Naive thymus-derived CD4-positive, alpha-beta T cell (primary cell): ENCODE measurements at regions of chr1 and their contacts with region 1.

Region 1: DNA sequence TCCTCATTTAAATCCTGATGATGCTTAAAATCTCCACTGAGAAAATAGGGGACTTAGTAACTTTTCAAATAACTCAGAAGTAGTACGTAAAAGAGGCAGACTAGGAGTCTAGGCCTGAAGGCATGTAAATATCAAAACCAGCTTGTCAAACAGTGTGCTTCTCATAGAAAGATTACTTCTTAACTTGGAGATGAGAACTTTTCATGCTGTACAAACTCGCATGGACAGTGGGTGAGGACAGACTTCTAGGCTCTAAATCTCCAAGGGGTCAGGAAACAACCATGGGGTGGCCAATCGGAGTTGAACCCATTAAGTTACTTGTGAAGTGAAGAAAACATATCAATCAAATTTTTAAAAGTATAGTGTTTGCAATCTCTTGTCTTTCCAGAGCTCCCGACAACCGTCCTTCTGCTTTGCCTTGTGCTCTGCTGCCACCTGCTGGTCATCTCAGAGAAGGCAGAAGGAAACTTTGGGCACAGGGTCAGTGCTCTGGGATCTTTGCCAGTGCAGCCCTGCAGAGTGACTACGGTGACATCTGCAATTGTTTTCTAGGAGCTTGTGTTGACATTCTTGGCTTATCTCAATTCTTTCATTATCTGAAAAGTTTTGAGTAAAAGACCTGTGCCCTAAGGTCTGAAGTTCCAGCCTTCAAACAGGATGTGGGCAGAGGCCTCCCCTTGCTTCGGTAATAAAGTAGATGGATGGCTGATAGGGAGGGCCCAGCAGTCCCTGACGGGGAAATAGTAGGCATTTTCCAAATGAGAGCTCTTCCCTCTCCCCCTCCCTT is 105.1 kb upstream of the PDE4B start:
- DNase-seq: peak; percentile 47 to 81 (median 71)
- ATAC-seq: peak; percentile 92
- H3K4me3 ChIP-seq: no peak overlapping the region
- H3K4me3 Mint-ChIP-seq: peak overlapping the region in 1 of 10 donors; percentile 17
- H3K27ac ChIP-seq: no peak overlapping the region
- H3K27ac Mint-ChIP-seq: peak overlapping the region in 1 of 9 donors; percentile 51
- H3K4me1 ChIP-seq: peaks cover 0 to 5% of the 10 kb centered on the region in 2 donors
- H3K4me1 Mint-ChIP-seq: peaks cover 0 to 14% (median 0%) of the 10 kb centered on the region in 7 donors
- H3K27me3 ChIP-seq: no peaks in the 10 kb centered on the region
- H3K27me3 Mint-ChIP-seq: peaks cover 11 to 29% (median 16%) of the 10 kb centered on the region in 5 donors

Region 2: DNA sequence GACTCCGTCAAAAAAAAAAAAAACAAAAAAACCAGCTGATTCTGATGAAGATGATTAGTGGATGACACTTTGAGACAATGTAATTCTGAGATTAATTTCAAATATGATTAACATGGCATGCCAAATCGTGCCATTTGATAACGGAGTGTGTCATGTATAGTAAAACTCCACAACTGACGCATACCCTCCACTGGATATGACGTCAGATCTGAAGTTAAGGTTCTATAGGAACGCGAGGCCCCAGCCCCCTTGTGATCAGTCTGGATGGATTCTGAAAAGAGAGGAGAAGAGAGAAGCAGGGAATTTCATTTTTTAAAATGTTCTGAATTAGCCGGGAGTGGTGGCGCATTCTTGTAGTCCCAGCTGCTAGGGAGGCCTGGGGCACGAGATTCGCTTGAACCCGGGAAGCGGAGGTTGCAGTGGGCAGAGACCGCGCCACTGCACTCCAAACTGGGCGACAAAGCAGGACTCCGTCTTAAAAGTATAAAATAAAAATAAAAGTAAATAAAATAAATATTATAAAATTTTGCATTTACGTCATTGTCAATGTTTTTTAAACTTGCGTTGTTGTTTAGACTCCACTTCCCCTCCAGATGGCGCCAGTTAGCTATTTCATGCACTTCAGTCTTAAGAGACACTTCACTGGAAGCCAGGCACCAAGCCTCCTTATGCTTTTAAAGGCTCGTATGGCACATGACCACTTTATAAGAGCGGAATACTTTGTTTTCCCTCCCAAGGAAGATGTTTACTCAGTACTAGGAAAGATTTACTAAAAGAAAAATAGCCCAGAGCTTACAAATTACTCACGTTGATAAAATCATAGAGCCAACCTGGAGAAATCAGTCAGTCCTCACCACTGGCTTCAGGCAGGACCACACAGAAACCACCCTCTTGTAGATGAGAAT is 1418.7 kb before region 1 on chr1:
- CTCF ChIA-PET with region 1: interaction called, 3 read pairs
- POLR2A ChIA-PET with region 1: no interaction called
- intact Hi-C with region 1: loop called in 1 of 2 experiments (anchors 1 kb)
- DNase-seq: peak; percentile 30 to 74 (median 62)
- ATAC-seq: peak; percentile 75
- H3K4me3 ChIP-seq: no peak overlapping the region
- H3K4me3 Mint-ChIP-seq: no peak overlapping the region
- H3K27ac ChIP-seq: no peak overlapping the region
- H3K27ac Mint-ChIP-seq: no peak overlapping the region
- H3K4me1 ChIP-seq: no peaks in the 10 kb centered on the region
- H3K4me1 Mint-ChIP-seq: no peaks in the 10 kb centered on the region
- H3K27me3 ChIP-seq: no peaks in the 10 kb centered on the region
- H3K27me3 Mint-ChIP-seq: peaks cover 3 to 18% (median 10%) of the 10 kb centered on the region in 5 donors

Region 3: GRCh38 chr1:64823691-64824476 is 863.7 kb before region 1 on chr1:
- CTCF ChIA-PET with region 1: interaction called, 3 read pairs
- POLR2A ChIA-PET with region 1: no interaction called
- intact Hi-C with region 1: loop called in 1 of 2 experiments (anchors 1 kb)
- DNase-seq: peak in 8 of 9 donors; percentile 38 to 74 (median 64)
- ATAC-seq: peak; percentile 80
- H3K4me3 ChIP-seq: no peak overlapping the region
- H3K4me3 Mint-ChIP-seq: peak overlapping the region in 3 of 10 donors; percentile 30 to 44 (median 44)
- H3K27ac ChIP-seq: no peak overlapping the region
- H3K27ac Mint-ChIP-seq: peak overlapping the region in 7 of 9 donors; percentile 5 to 77 (median 39)
- H3K4me1 ChIP-seq: peaks cover 5 to 17% of the 10 kb centered on the region in 2 donors
- H3K4me1 Mint-ChIP-seq: peaks cover 13 to 31% (median 26%) of the 10 kb centered on the region in 7 donors
- H3K27me3 ChIP-seq: no peaks in the 10 kb centered on the region
- H3K27me3 Mint-ChIP-seq: peaks cover 0 to 2% (median 0%) of the 10 kb centered on the region in 5 donors

Region 4: GRCh38 chr1:65075123-65075976 is 612.3 kb before region 1 on chr1:
- CTCF ChIA-PET with region 1: interaction called, 8 read pairs
- POLR2A ChIA-PET with region 1: no interaction called
- intact Hi-C with region 1: loop called (anchors 1 to 5 kb)
- DNase-seq: peak in 8 of 9 donors; percentile 43 to 81 (median 72)
- ATAC-seq: peak; percentile 97
- H3K4me3 ChIP-seq: no peak overlapping the region
- H3K4me3 Mint-ChIP-seq: peak overlapping the region in 1 of 10 donors; percentile 22
- H3K27ac ChIP-seq: no peak overlapping the region
- H3K27ac Mint-ChIP-seq: peak overlapping the region in 3 of 9 donors; percentile 26 to 76 (median 43)
- H3K4me1 ChIP-seq: peaks cover under 1 to 4% of the 10 kb centered on the region in 2 donors
- H3K4me1 Mint-ChIP-seq: peaks cover 6 to 34% (median 28%) of the 10 kb centered on the region in 7 donors
- H3K27me3 ChIP-seq: no peaks in the 10 kb centered on the region
- H3K27me3 Mint-ChIP-seq: peaks cover 0 to 9% (median 4%) of the 10 kb centered on the region in 5 donors

Region 5: GRCh38 chr1:65235867-65236805 is 451.5 kb before region 1 on chr1:
- CTCF ChIA-PET with region 1: interaction called, 26 read pairs
- POLR2A ChIA-PET with region 1: no interaction called
- intact Hi-C with region 1: loop called in 1 of 2 experiments (anchors 1 kb)
- DNase-seq: peak in 4 of 9 donors; percentile 12 to 28 (median 22)
- ATAC-seq: peak; percentile 54
- H3K4me3 ChIP-seq: no peak overlapping the region
- H3K4me3 Mint-ChIP-seq: no peak overlapping the region
- H3K27ac ChIP-seq: no peak overlapping the region
- H3K27ac Mint-ChIP-seq: no peak overlapping the region
- H3K4me1 ChIP-seq: no peaks in the 10 kb centered on the region
- H3K4me1 Mint-ChIP-seq: peaks cover 2 to 18% (median 2%) of the 10 kb centered on the region in 7 donors
- H3K27me3 ChIP-seq: no peaks in the 10 kb centered on the region
- H3K27me3 Mint-ChIP-seq: peaks cover 6 to 23% (median 14%) of the 10 kb centered on the region in 5 donors

Region 6: DNA sequence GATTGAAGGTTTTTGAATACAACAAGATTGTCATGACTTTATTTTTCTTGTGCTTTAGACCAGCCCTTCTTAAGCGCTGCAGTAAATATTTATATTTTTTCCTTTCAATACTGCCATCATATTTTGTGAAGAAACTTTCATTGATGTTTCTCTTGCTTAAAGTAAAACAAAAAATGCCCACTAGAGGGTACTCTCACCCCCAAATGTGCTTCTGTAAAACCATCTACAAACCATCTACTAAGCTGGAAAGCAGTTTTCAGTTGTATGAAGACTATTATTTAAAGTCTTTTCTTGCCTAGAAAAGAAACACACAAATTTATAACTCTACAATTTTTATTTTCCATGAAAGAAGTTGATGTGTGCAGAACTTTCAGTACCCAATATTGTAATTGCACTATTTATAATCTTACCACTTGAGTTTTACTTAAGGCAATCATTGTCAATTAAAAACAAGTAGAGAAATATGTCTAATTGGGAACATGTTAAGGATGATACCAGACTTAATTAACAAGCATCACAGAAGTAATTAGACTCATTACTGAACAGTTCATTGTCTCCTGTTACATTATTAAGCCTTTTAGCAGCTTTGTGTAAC is 256.4 kb before region 1 on chr1:
- CTCF ChIA-PET with region 1: interaction called, 9 read pairs
- POLR2A ChIA-PET with region 1: no interaction called
- intact Hi-C with region 1: loop called (anchors 1 to 2 kb)
- DNase-seq: peak in 5 of 9 donors; percentile 32 to 43 (median 33)
- ATAC-seq: peak; percentile 67
- H3K4me3 ChIP-seq: no peak overlapping the region
- H3K4me3 Mint-ChIP-seq: no peak overlapping the region
- H3K27ac ChIP-seq: no peak overlapping the region
- H3K27ac Mint-ChIP-seq: no peak overlapping the region
- H3K4me1 ChIP-seq: no peaks in the 10 kb centered on the region
- H3K4me1 Mint-ChIP-seq: peaks cover 0 to 28% (median 3%) of the 10 kb centered on the region in 7 donors
- H3K27me3 ChIP-seq: no peaks in the 10 kb centered on the region
- H3K27me3 Mint-ChIP-seq: no peaks in the 10 kb centered on the region